ENCODE measurements at regions of chr7 and their contacts with region 1.

Region 1: DNA sequence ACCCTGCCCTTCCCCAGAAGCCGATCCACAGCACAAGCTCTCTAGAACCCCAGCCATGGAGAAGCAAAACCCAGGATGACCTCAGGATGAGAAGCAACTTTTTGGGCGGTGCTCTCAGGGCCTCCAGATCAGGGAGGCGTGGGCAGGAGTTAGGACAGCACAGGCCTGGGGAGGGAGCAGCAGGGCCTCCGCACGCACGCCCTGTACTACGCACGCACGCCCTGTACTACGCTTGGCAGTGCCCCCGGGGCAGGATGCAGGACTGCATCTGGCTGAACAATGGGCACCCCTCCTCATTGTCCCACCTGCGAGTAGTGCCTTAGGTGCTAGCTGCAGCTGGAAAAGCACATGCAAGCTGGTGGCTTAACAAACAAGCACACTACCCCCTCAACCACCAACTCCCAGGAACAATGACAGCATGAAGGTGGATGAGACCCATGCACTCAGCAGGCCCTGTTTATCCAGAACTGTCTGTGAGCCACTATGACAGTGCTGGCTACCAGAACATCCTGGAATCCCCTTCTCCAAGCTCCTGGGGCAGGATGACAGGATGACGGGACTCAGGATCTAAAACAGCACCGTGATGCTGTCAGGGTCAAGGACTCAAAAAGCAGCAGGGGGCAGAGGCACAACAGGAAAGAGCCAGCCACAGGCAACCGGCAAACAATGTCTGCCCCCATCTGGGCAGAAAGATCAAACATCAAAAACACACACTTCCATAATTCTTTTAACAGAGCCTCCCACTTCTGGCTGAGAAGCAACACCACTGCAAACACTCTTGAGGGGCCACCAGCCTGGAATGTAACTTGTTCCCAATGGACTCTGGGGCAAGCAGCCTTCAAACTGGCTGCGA is 11.8 kb downstream of the PODXL start:
- DNase-seq: peak; percentile 40
- H3K4me3 ChIP-seq: no peak overlapping the region
- H3K27ac ChIP-seq: no peak overlapping the region
- H3K4me1 ChIP-seq: no peaks in the 10 kb centered on the region
- CTCF ChIP-seq: peak; percentile 63

Region 2: GRCh38 chr7:131471605-131472004 is 73.1 kb before region 1 on chr7:
- CTCF ChIA-PET with region 1: no interaction called
- POLR2A ChIA-PET with region 1: no interaction called
- intact Hi-C with region 1: no loop called
- DNase-seq: no peak
- H3K4me3 ChIP-seq: no peak overlapping the region
- H3K27ac ChIP-seq: no peak overlapping the region
- H3K4me1 ChIP-seq: no peaks in the 10 kb centered on the region
- CTCF ChIP-seq: no peak

Region 3: DNA sequence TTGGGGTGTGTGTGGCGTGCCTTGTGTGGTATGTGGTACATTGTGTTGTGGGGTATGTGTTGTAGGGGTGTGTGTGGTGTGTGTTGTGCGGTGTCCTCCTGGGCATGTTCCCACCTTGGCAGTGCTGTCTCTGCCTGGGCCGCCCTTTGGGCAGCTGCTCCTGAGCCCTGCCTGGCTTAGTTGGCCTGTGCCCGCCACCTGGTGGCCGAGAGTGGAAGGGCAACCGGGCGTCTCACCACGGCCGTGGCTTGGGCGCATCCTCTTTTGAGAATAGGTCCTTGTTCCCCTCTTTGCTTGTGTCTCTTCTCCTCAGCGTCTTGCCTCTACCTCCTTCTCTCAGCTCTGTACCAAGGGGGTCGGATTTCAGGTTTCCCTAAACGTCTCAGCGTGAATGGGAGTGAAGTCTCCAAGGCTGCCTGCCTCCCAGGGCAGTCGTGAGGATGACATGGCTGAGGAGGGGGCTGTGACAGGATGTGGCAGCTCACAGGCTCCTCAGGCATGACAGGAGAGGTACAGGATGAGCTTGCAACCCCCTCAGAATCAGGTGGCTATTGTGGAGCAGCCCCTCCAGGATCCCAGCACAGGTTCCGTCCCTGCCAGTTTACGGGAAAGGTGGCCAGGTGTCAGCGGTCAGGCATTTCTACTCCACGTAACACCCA is 110.1 kb after region 1 on chr7:
- CTCF ChIA-PET with region 1: no interaction called
- POLR2A ChIA-PET with region 1: no interaction called
- intact Hi-C with region 1: loop called (anchors 2 kb)
- DNase-seq: peak; percentile 73
- H3K4me3 ChIP-seq: no peak overlapping the region
- H3K27ac ChIP-seq: no peak overlapping the region
- H3K4me1 ChIP-seq: no peaks in the 10 kb centered on the region
- CTCF ChIP-seq: peak; percentile 79

Measured in OCI-LY7 (cell line).